K562 (cell line): ENCODE measurements at regions of chr20 and their contacts with region 1.

Region 1: GRCh38 chr20:50690634-50691572 is at the start of gene RIPOR3:
- DNase-seq: peak; percentile 82 to 97 (median 91)
- ATAC-seq: peak; percentile 81
- H3K4me3 ChIP-seq: peak within 1 kb of the TSS; percentile 52
- H3K27ac ChIP-seq: peak within 1 kb of the TSS; percentile 85
- H3K4me1 ChIP-seq: peaks cover 46 to 47% of the 10 kb centered on the region in 2 experiments
- H3K27me3 ChIP-seq: no peaks in the 10 kb centered on the region
- CTCF ChIP-seq: peak in 1 of 3 experiments; percentile 11; a peak in 1 of 6 replicates
- EP300 ChIP-seq: peak; percentile 96
- POLR2A ChIP-seq: peak; percentile 72
- RAD21 ChIP-seq: no peak
- polyA plus RNA-seq, gene RIPOR3: 3.3 to 3.8 TPM

Region 2: GRCh38 chr20:50668326-50668725 is 22.6 kb before region 1 on chr20:
- CTCF ChIA-PET with region 1: no interaction called
- POLR2A ChIA-PET with region 1: interaction called, 12 read pairs
- in situ Hi-C with region 1: no loop called
- intact Hi-C with region 1: loop called (anchors 2 kb)
- DNase-seq: peak in 1 of 4 experiments; percentile 12
- ATAC-seq: no peak
- H3K4me3 ChIP-seq: no peak overlapping the region
- H3K27ac ChIP-seq: no peak overlapping the region
- H3K4me1 ChIP-seq: peaks cover 39 to 46% of the 10 kb centered on the region in 2 experiments
- H3K27me3 ChIP-seq: no peaks in the 10 kb centered on the region; a peak in 1 of 5 replicates
- CTCF ChIP-seq: no peak
- EP300 ChIP-seq: no peak
- POLR2A ChIP-seq: no peak
- RAD21 ChIP-seq: no peak

Region 3: GRCh38 chr20:50673465-50674142 is 17.3 kb before region 1 on chr20:
- CTCF ChIA-PET with region 1: no interaction called
- POLR2A ChIA-PET with region 1: interaction called, 12 read pairs
- in situ Hi-C with region 1: no loop called
- intact Hi-C with region 1: loop called (anchors 2 kb)
- DNase-seq: peak; percentile 66 to 87 (median 76)
- ATAC-seq: peak; percentile 89
- H3K4me3 ChIP-seq: no peak overlapping the region
- H3K27ac ChIP-seq: peak overlapping the region; percentile 66
- H3K4me1 ChIP-seq: peaks cover 45 to 52% of the 10 kb centered on the region in 2 experiments
- H3K27me3 ChIP-seq: no peaks in the 10 kb centered on the region; a peak in 1 of 5 replicates
- CTCF ChIP-seq: no peak
- EP300 ChIP-seq: peak; percentile 60; the same call in 1 of the 2 replicates
- POLR2A ChIP-seq: peak; percentile 32; the same call in 1 of the 2 replicates
- RAD21 ChIP-seq: no peak

Region 4: DNA sequence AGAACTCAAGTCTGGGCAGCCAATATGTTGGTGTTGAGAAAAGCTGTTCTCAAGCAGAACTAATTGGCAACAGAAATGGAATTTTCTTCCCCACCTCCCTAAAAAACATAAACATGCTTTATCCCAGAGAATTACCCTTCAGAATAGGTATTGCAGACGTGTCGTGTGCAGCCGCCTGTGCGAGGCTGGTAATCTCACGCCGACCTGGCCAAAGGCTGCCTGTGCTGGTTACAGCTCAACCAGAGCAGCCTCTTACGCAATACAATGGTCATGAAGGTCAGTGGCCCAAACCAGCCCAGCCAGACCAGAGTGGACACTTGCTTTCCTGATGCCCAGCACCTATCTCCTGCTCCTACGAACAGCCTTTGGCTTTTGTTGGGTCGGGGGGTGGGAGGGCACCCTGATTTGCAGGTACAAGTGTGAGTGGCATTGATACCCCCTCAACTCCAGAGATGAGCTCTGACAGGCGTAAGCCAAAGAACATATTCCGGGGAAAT is 10.4 kb before region 1 on chr20:
- CTCF ChIA-PET with region 1: no interaction called
- POLR2A ChIA-PET with region 1: interaction called, 10 read pairs
- in situ Hi-C with region 1: no loop called
- intact Hi-C with region 1: no loop called
- DNase-seq: no peak
- ATAC-seq: peak; percentile 35; the same call in 1 of the 3 replicates
- H3K4me3 ChIP-seq: no peak overlapping the region
- H3K27ac ChIP-seq: peak overlapping the region; percentile 1; the same call in 1 of the 3 replicates
- H3K4me1 ChIP-seq: peaks cover 26% of the 10 kb centered on the region in 2 experiments
- H3K27me3 ChIP-seq: no peaks in the 10 kb centered on the region
- CTCF ChIP-seq: no peak
- EP300 ChIP-seq: no peak
- POLR2A ChIP-seq: no peak
- RAD21 ChIP-seq: no peak

Region 5: DNA sequence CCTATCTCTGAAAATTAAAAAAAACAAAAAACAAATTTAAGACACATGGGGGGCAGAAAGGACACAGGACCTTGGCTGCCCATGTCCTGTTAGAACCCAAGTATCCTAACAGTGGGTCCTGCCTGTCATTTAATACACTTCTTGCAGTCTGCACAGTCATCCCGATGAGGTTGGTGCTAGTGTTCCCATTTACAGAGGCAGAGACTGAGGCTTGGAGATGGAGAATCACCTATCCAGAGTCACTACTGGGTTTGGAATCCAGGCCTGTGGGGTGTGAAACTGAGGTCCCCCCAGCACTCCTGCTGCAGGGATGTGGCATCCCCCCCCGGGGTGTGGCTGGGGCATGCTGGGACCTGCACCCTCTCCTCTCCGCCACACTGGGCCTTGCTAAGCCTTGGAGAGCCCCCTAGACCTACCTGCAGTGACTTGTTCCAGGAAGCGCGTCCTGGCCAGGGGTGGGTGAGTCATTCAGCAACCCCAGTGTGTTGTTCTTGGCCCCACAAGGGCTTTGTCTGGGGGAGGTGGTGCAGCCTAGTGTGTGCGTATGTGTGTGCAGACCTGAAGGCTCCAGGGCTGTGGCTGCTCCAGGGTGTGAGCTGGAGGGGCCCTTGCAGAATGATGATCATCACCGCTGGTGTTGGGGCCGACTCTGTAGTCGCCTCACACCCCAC is 153.7 kb after region 1 on chr20:
- CTCF ChIA-PET with region 1: no interaction called
- POLR2A ChIA-PET with region 1: no interaction called
- in situ Hi-C with region 1: no loop called
- intact Hi-C with region 1: no loop called
- DNase-seq: peak; percentile 37 to 53 (median 42)
- ATAC-seq: peak; percentile 59
- H3K4me3 ChIP-seq: no peak overlapping the region
- H3K27ac ChIP-seq: no peak overlapping the region
- H3K4me1 ChIP-seq: peaks cover 0 to 27% of the 10 kb centered on the region in 2 experiments; a peak in 3 of 5 replicates
- H3K27me3 ChIP-seq: peaks cover 3 to 15% of the 10 kb centered on the region in 2 experiments; a peak in 3 of 5 replicates
- CTCF ChIP-seq: no peak
- EP300 ChIP-seq: no peak
- POLR2A ChIP-seq: no peak
- RAD21 ChIP-seq: no peak